ENCODE measurements at regions of chr4 and their contacts with region 1.

Region 1: GRCh38 chr4:105225500-105225899 is 78.8 kb downstream of the TET2 start:
- DNase-seq: no peak
- ATAC-seq: no peak
- H3K4me3 ChIP-seq: no peak overlapping the region
- H3K27ac ChIP-seq: no peak overlapping the region
- H3K4me1 ChIP-seq: peaks cover 8 to 16% of the 10 kb centered on the region in 2 donors
- H3K27me3 ChIP-seq: no peaks in the 10 kb centered on the region
- CTCF ChIP-seq: no peak
- POLR2A ChIP-seq: no peak

Region 2: DNA sequence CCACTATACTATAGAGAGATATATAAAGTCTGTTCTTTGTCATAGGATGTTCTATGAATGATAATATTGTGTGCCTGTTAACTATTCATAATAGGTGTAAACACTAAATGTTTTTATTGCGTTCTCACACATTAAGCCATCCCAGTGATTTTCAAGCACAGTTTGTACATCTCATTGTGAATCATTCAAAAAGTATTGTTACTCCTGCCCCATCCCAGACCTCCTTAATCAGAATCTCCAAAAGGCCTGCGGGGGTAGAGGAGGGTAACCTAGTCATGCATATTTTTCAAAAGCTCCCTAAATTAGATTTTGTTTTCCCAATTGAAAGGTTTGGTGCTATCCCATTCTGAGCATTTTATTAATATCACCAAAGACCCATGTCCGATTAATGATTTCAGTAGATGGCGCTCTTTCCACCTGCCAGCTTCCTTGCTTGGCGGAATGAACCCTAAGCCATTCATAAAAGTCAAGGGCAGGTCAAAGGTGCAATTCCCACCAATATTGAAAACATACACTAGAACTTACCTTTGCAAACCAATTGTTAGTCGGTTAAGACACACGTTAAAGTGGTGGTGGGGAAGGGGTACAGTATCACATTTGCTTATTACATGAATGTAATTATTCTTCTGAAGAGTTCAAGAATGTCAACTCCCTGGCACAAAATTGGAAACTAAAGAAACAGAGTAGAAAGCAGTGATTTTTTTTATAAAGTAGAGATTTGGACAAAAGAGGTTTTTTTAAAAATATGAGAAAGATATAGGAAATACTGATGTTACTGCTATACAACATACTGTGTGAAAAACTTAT is 84.6 kb before region 1 on chr4:
- in situ Hi-C with region 1: no loop called
- intact Hi-C with region 1: loop called (anchors 5 kb)
- DNase-seq: no peak
- ATAC-seq: peak; percentile 38 to 43
- H3K4me3 ChIP-seq: no peak overlapping the region
- H3K27ac ChIP-seq: no peak overlapping the region
- H3K4me1 ChIP-seq: no peaks in the 10 kb centered on the region
- H3K27me3 ChIP-seq: no peaks in the 10 kb centered on the region
- CTCF ChIP-seq: peak; percentile 31 to 69 (median 44)
- POLR2A ChIP-seq: no peak

Region 3: DNA sequence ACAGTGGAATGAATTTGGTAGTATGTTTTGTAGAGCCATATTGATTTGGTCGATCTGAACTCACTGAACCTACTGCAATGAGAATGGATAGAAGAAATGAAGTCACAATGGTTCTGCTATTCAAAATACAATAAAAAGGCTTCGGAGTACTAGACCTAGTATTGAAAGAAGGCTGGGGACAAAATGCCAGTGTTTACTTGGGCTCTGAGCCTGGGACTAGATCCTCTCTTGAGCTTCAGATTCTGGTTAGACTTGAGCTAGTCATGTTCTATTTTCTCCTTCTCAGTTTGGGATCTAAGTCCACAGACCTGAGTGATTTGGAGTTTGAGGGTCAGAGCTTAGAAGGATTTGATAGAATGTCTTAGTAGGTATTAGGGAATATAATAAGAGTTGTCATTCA is 473.1 kb after region 1 on chr4:
- in situ Hi-C with region 1: no loop called
- intact Hi-C with region 1: no loop called
- DNase-seq: no peak
- ATAC-seq: no peak
- H3K4me3 ChIP-seq: no peak overlapping the region
- H3K27ac ChIP-seq: no peak overlapping the region
- H3K4me1 ChIP-seq: no peaks in the 10 kb centered on the region
- H3K27me3 ChIP-seq: no peaks in the 10 kb centered on the region
- CTCF ChIP-seq: no peak
- POLR2A ChIP-seq: no peak

Measured in gastrocnemius medialis (tissue), 4 donors.